A673 (cell line): ENCODE measurements at regions of chr3 and their contacts with region 1.

Region 1: DNA sequence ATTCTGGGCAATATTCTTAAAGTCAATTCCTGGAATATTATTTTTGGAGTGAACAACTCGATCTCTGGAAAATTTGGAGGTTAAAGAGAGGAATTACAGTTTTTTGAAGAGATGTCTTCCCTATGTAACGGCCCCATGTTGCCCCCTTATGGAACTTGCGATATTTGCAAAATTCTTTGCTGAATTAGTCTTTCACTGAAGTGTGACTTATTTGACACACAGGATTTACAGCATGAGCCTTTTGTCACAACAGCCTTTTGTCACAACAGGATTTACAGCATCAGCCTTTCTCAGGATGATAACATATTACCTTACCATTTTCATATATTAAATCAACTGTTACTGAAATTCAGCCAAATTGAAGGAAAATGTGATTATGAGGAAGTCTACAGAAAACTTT is 37.8 kb upstream of the SPTSSB start:
- DNase-seq: peak; percentile 74
- H3K4me3 ChIP-seq: no peak overlapping the region
- H3K27ac ChIP-seq: no peak overlapping the region
- H3K4me1 ChIP-seq: no peaks in the 10 kb centered on the region
- H3K27me3 ChIP-seq: no peaks in the 10 kb centered on the region
- CTCF ChIP-seq: peak; percentile 64

Region 2: DNA sequence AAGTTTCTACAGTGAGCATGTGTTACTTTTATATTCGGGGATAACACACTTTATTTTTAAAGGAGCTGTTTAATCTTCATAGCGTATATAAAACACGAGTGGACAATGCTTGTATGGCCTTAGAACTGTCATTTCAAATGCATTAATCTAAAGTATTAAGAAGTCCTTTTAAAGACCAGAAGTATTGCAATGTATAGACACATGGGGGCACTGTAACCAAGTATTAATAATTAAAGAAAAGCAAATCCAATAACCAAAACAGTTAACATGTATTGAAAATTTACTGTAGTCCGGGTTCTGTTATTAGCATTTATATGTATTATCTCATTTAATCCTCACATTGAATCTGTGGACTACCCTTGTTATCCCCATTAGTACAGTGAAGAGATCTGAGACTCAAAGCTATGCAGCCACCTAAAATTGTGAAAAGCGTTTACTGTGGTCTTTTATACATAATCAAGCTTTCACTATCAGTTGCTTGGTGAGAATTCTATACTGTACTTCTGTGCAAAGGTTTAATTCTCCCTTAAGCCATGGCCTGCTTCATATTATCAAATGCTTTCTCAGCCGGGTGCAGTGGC is 722.0 kb before region 1 on chr3:
- CTCF ChIA-PET with region 1: no interaction called
- POLR2A ChIA-PET with region 1: no interaction called
- intact Hi-C with region 1: loop called (anchors 5 kb)
- DNase-seq: peak; percentile 31
- H3K4me3 ChIP-seq: no peak overlapping the region
- H3K27ac ChIP-seq: no peak overlapping the region
- H3K4me1 ChIP-seq: no peaks in the 10 kb centered on the region
- H3K27me3 ChIP-seq: no peaks in the 10 kb centered on the region
- CTCF ChIP-seq: peak; percentile 61

Region 3: GRCh38 chr3:161305095-161305991 is 103.7 kb before region 1 on chr3:
- CTCF ChIA-PET with region 1: no interaction called
- POLR2A ChIA-PET with region 1: no interaction called
- intact Hi-C with region 1: loop called (anchors 10 kb)
- DNase-seq: peak; percentile 41
- H3K4me3 ChIP-seq: no peak overlapping the region
- H3K27ac ChIP-seq: no peak overlapping the region
- H3K4me1 ChIP-seq: no peaks in the 10 kb centered on the region
- H3K27me3 ChIP-seq: no peaks in the 10 kb centered on the region
- CTCF ChIP-seq: peak; percentile 75

Region 4: DNA sequence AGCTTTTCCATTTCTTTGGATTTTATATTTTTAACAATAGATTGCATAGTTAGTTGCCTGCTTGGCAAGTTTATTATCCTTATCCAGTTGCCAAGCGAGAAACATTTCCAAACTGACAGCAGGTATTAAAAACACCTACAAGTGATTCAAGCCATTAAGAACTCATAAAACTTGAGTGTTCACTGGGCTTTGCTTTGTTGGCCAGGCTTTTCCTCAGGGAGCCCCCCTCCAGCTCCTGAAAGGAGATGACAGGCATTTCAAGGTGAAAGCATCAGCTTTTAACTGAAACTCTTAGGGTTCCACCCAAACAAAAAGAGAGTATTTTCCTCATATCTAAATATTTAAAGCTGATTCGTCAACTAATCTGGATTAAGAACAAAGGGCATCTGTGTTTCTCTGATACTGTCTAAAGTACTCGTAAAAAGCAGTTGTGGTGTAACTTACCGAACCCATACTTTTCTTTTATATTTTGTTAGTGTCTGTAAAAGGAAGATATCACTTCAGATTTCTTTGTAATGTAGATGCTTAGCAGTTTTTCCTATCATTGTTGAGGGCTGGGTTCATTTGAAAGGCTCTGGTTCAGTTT is 450.9 kb after region 1 on chr3:
- CTCF ChIA-PET with region 1: no interaction called
- POLR2A ChIA-PET with region 1: no interaction called
- intact Hi-C with region 1: no loop called
- DNase-seq: no peak
- H3K4me3 ChIP-seq: no peak overlapping the region
- H3K27ac ChIP-seq: peak overlapping the region; percentile 4
- H3K4me1 ChIP-seq: peaks cover 28% of the 10 kb centered on the region
- H3K27me3 ChIP-seq: no peaks in the 10 kb centered on the region
- CTCF ChIP-seq: no peak